ENCODE measurements at regions of chr5 and their contacts with region 1.

Region 1: DNA sequence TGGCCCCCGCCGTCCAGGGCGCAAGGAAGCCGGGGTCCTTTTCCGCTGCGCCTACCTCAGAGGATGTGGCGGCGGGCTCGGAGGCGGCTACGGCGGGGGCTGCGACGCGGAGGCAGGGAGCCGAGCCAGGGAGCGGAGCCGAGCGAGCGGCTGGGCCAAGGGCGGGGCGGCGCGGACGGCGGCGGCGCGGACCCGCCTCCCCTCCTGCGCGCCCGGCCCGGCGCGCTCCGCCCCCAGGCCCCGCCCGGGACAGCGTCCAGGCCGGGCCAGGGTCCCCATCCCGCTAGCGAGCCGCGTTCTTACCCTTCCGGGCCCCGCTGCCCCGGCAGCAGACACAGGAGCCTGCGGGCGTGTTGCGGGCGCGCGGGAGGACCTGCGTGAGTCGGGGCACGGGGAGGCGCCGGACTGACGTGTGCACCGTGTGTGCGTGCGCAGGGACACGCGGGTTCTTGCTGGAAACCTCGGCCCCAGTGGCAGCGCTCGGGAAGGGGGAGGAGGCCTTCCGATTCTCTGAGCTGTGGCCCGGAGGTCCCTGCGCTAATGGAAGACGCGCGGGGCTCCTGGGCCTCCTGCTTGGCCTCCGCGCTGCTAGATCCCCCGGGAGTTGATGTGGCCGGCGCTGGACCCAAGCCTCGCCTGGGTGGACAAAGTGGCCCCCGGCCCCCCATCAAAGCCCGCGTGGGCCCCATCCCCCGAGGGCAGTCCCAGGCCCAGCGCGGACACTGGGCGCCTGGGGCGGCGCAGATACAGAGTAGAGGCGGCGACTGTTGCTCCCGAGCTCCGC is at the start of gene VDAC1:
- DNase-seq: peak; percentile 78
- H3K4me3 Mint-ChIP-seq: peak within 1 kb of the TSS; percentile 93
- H3K27ac Mint-ChIP-seq: peak within 1 kb of the TSS; percentile 97
- H3K4me1 Mint-ChIP-seq: peaks cover 53% of the 10 kb centered on the region
- H3K27me3 Mint-ChIP-seq: peaks cover 2% of the 10 kb centered on the region
- total RNA-seq, gene VDAC1: 440 and 442 TPM in 2 replicates

Region 2: GRCh38 chr5:133460172-133460758 is 544.5 kb before region 1 on chr5:
- intact Hi-C with region 1: no loop called
- DNase-seq: peak; percentile 12
- H3K4me3 Mint-ChIP-seq: no peak overlapping the region
- H3K27ac Mint-ChIP-seq: no peak overlapping the region
- H3K4me1 Mint-ChIP-seq: no peaks in the 10 kb centered on the region
- H3K27me3 Mint-ChIP-seq: peaks cover 14% of the 10 kb centered on the region

Region 3: DNA sequence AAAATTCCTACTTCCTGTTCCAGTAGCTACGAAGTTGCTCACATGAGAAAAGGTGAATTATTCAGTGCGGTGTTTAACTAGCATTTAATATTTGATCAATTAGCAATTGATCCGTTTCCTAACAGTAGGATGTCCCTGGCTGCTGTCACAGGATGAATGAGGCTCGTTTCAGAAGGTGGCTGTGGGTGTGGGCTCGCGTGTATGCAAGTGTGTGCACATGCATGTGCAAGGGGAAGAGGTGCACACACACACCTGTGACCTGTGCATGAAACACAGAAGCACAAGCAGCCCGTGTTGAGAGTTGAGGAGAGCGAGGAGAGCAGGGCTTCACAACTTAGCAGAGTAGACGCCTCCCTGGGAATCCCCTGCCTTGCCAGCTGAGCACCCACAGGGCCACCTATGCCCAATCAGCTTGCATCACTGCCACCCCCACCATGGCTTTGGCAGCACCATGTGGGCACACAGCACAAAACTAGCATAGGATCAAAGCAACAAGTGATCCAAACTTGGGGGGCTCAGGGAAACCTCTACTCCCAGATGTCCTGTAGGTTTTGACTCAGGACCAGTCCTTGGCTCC is 143.5 kb before region 1 on chr5:
- intact Hi-C with region 1: no loop called
- DNase-seq: no peak
- H3K4me3 Mint-ChIP-seq: no peak overlapping the region
- H3K27ac Mint-ChIP-seq: no peak overlapping the region
- H3K4me1 Mint-ChIP-seq: peaks cover 9% of the 10 kb centered on the region
- H3K27me3 Mint-ChIP-seq: peaks cover 6% of the 10 kb centered on the region

Region 4: DNA sequence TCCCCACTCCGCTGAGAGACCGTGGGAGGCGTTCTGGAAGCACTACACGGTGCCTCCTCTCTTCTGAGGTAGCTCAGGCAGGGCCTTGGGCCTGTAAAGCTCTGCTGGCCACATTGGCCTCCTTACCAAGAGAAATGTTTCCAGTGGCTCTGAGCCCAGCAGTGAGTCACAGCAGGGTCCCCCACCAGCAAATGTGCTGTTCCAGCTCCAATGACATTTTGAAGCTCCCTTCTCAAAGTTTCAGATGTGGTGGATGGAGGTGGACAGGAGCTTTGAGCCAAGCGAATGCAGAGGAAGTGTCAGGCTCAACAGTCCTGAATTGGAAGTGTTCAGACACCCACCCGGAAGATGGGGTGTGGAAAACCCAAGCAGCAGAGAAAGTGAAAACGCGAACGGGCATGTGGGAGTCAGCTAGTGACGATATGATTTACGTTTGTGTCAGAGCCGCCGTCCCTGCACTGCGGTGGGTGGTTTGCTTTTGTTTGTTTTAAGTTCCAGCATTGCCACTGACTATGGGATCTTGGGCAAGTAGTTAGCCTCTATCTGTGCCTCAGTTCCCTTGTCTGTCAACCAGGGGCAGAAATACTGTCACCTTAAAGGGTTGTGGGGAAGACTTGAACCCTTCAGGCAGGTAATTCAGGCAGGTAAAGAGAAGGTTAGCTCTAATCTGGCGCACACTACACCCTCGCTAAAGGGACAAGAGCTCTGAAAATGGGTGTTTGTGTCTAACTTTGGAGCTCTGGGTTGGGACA is 74.5 kb before region 1 on chr5:
- intact Hi-C with region 1: loop called (anchors 2 kb)
- DNase-seq: peak; percentile 40
- H3K4me3 Mint-ChIP-seq: peak overlapping the region; percentile 72
- H3K27ac Mint-ChIP-seq: peak overlapping the region; percentile 99
- H3K4me1 Mint-ChIP-seq: peaks cover 58% of the 10 kb centered on the region
- H3K27me3 Mint-ChIP-seq: peaks cover 4% of the 10 kb centered on the region

Region 5: DNA sequence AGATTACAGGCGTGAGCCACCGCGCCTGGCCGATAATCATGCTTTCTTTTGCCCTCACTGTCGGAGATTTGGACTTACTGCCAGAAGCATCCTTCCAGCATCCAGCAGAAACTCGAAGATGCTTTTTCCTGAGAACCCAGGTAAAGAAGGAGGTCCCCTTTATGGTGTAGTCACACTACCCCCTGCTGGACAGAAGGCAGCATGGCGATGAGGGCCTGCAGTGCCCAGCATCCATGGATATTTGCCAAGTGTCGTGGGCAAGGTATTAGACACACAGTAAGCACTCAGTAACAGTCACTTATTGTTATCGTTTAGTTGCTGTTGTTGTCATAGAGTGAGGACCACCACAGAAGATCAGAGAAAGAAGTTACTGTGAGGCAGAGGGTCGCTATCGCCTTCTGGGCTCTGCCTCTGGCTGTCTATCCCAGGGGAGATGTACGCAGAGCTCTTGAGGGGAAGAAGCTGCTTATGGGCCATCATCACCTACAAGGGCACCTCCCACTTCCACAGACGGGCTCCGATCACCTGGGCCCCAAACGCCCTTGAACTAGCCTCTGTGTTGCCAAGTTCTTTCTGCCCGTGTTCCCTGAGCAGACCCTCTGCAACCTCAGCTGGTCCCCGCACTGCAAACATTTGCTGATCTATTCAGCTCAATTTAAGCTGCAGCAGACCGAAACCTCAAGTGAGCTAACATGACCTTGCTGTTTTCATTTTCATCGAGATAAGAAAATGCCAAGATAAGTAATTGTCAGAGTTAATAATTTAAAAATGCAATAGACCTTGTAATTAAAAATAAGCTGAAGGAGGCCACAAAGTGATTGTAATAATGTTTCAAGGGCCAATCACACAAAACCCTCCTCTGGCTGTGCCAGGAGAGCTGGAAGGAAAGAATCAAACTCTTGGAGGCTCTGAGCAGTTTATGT is 60.3 kb before region 1 on chr5:
- intact Hi-C with region 1: no loop called
- DNase-seq: no peak
- H3K4me3 Mint-ChIP-seq: no peak overlapping the region
- H3K27ac Mint-ChIP-seq: no peak overlapping the region
- H3K4me1 Mint-ChIP-seq: peaks cover 10% of the 10 kb centered on the region
- H3K27me3 Mint-ChIP-seq: peaks cover 1% of the 10 kb centered on the region

Region 6: DNA sequence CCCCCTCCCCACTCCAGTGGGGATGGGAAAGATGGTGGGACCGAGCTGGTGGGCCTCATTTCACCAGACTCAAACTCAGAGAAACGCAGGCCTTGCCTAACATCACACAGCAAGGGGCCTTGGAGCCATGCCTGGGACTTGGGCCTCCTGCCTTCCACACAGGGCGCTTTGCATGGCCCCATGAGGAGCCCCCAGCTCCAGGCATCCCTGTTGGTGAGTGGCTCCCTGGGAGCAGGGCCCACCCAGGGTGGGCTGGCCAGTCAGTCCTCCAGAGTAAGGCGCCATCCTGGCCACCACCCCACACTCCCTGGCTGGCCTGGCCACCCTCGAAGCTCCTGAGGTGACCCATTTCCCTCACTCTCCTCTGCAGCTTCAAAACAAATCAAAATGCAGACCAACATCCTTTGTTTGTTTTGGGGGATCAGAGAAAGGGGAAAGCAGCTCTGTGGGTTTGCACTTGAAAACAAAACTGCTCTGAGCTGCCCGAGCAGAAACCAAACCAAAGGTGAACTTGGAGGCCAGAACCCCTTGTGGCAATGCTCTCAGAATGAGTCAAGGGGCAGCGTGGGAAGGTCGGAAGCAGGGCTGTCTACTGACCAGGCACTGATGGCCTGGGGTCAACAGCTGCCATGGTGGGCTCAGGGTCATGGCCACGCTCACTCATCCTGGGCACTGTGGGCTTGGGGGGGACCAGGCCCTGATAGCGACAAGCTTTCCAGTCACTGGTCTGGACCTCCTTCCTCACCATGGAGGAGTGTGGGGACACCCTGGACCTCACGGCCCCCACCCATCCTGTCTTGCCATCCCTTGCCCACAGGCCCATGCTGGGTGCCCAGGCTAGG is 37.0 kb after region 1 on chr5:
- intact Hi-C with region 1: loop called (anchors 1 kb)
- DNase-seq: no peak
- H3K4me3 Mint-ChIP-seq: no peak overlapping the region
- H3K27ac Mint-ChIP-seq: no peak overlapping the region
- H3K4me1 Mint-ChIP-seq: peaks cover 16% of the 10 kb centered on the region
- H3K27me3 Mint-ChIP-seq: peaks cover 11% of the 10 kb centered on the region

Region 7: DNA sequence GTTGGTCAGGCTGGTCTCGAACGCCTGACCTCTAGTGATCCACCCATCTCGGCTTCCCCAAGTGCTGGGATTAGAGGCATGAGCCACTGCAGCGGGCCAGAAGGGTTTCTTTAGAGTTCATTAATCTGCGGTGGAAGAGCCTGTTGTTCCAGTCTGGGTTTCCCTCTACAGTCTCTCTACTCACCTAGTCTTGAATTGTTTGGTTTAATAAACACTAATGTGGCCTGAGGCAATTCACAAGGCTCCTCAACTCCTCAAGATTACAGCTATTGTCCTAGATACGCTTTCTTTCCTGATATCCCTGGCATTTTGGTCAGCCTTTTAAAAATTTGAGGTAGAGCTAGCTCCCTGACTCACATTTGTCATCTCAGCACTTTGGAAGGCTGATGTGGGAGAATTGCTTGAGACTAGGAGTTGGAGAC is 632.4 kb after region 1 on chr5:
- intact Hi-C with region 1: loop called (anchors 10 kb)
- DNase-seq: no peak
- H3K4me3 Mint-ChIP-seq: no peak overlapping the region
- H3K27ac Mint-ChIP-seq: no peak overlapping the region
- H3K4me1 Mint-ChIP-seq: peaks cover 7% of the 10 kb centered on the region
- H3K27me3 Mint-ChIP-seq: no peaks in the 10 kb centered on the region

Region 8: GRCh38 chr5:134845852-134846640 is 841.3 kb after region 1 on chr5 and contains the start of gene C5orf24:
- intact Hi-C with region 1: loop called (anchors 10 kb)
- DNase-seq: peak; percentile 90
- H3K4me3 Mint-ChIP-seq: peak within 1 kb of the TSS; percentile 97
- H3K27ac Mint-ChIP-seq: peak within 1 kb of the TSS; percentile 97
- H3K4me1 Mint-ChIP-seq: peaks cover 25% of the 10 kb centered on the region
- H3K27me3 Mint-ChIP-seq: no peaks in the 10 kb centered on the region
- total RNA-seq, gene C5orf24: 42.2 and 43.2 TPM in 2 replicates